Activated CD4-positive, alpha-beta T cell treated with anti-CD3 and anti-CD28 coated beads for 36 hours (primary cell): ENCODE measurements at regions of chr6 and their contacts with region 1.

Region 1: DNA sequence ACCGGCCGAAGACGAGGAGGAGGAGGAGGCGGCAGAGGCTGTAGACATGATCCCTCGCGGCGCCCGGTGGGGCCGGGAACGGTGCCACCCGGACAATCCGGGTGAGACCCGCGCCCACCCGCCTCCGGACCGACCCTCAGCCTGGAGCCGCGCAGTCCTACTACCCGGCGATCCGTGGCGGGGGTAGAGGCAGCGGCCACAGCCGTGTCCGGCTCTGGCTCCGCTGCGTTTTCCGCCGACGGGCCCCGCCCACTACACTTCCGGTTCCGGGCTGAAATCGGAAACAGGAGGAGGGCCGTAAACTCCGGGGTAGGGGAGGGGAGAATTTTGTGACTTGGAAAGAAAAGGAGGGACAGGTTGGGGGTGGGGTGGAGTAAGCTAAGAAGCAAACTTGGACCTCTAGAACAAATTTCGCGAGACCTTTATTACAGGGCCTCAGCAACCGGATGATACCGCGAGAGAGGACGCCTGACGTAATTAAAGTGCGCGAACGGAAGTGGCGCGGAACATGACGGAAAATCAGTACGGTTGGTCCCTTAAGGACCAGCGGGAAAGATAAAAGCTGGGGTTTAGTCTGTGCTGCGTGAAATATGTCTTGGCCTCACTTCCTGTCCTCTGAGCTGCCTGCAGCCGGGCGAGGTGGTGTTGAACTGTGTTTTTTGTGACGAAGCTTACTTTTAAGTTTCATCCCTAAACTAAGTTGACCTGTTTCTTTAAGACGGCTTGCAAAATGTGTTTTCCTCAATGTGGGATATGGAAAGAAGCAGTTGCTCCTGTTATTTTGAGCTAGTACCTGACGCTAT is at the start of gene MAP3K7:
- DNase-seq: peak; percentile 95
- ATAC-seq: peak; percentile 93
- H3K4me3 Mint-ChIP-seq: peak within 1 kb of the TSS; percentile 95
- H3K27ac Mint-ChIP-seq: peak within 1 kb of the TSS; percentile 98
- H3K4me1 Mint-ChIP-seq: peaks cover 40% of the 10 kb centered on the region
- H3K27me3 Mint-ChIP-seq: peaks cover 7% of the 10 kb centered on the region
- total RNA-seq, gene MAP3K7: 27.5 to 32.6 TPM

Region 2: DNA sequence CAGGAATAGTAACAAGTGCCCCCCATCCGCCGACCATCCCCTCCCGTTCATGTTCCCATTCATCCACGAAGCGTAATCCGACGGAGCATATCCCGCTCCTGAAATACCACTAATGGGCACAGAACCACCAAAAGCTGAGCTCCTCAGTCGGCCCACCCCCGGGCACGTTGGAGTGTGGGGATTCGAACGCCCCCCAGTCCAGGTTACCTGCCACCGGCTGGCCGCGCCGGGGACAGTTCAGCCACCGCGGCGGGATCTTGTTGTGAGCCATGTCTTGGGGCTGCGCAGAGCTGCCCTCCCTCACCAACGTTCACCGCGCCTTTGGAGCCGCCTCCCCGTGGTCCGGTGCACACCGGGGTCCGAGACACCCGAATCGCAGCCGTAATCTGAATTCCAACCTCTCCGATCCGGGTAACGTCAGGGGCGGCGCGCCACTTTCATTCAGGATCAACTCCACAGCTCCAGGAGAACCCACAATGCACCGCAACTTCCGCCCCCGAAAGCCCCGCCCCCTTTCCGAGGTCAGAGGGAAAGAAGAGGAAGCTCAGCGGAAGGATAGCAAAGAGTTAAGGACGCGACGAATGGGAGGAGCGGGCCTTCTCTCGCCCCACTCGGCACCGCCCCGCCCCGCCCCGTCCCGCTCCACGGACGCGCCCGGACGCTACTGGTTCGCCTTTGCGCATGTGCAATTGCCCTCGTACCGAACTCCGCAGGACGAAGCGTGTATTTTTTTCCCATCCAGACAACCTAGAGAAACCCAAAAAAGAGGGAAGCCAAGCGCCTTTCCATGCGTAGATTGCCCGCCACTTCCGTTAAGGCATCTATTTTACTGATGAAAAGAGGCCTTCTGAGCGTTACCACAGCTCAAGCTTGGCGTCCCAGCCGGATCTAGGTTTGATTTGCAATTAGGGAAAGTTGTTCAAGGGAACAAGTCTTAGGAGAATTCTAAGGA is 1623.6 kb before region 1 on chr6 and contains the start of gene RNGTT:
- CTCF ChIA-PET with region 1: no interaction called
- POLR2A ChIA-PET with region 1: no interaction called
- intact Hi-C with region 1: loop called in 1 of 2 experiments (anchors 1 kb)
- DNase-seq: peak; percentile 99
- ATAC-seq: peak; percentile 100
- H3K4me3 Mint-ChIP-seq: peak within 1 kb of the TSS; percentile 99
- H3K27ac Mint-ChIP-seq: peak within 1 kb of the TSS; percentile 93
- H3K4me1 Mint-ChIP-seq: peaks cover 45% of the 10 kb centered on the region
- H3K27me3 Mint-ChIP-seq: no peaks in the 10 kb centered on the region
- total RNA-seq, gene RNGTT: 17.5 to 21.5 TPM

Region 3: GRCh38 chr6:89412071-89413005 is 1174.7 kb before region 1 on chr6 and contains the start of gene RRAGD:
- CTCF ChIA-PET with region 1: no interaction called
- POLR2A ChIA-PET with region 1: no interaction called
- intact Hi-C with region 1: loop called in 1 of 2 experiments (anchors 5 kb)
- DNase-seq: peak; percentile 83
- ATAC-seq: peak; percentile 80
- H3K4me3 Mint-ChIP-seq: peak within 1 kb of the TSS; percentile 83
- H3K27ac Mint-ChIP-seq: peak within 1 kb of the TSS; percentile 85
- H3K4me1 Mint-ChIP-seq: peaks cover 20% of the 10 kb centered on the region
- H3K27me3 Mint-ChIP-seq: peaks cover 3% of the 10 kb centered on the region
- total RNA-seq, gene RRAGD: 19.6 to 20.1 TPM

Region 4: GRCh38 chr6:89638320-89639195 is 948.5 kb before region 1 on chr6 and contains the start of gene LYRM2:
- CTCF ChIA-PET with region 1: no interaction called
- POLR2A ChIA-PET with region 1: no interaction called
- intact Hi-C with region 1: loop called (anchors 1 kb)
- DNase-seq: peak; percentile 96
- ATAC-seq: peak; percentile 97
- H3K4me3 Mint-ChIP-seq: peak within 1 kb of the TSS; percentile 86
- H3K27ac Mint-ChIP-seq: peak within 1 kb of the TSS; percentile 98
- H3K4me1 Mint-ChIP-seq: peaks cover 22% of the 10 kb centered on the region
- H3K27me3 Mint-ChIP-seq: no peaks in the 10 kb centered on the region
- total RNA-seq, gene LYRM2: 24.5 to 27.9 TPM

Region 5: DNA sequence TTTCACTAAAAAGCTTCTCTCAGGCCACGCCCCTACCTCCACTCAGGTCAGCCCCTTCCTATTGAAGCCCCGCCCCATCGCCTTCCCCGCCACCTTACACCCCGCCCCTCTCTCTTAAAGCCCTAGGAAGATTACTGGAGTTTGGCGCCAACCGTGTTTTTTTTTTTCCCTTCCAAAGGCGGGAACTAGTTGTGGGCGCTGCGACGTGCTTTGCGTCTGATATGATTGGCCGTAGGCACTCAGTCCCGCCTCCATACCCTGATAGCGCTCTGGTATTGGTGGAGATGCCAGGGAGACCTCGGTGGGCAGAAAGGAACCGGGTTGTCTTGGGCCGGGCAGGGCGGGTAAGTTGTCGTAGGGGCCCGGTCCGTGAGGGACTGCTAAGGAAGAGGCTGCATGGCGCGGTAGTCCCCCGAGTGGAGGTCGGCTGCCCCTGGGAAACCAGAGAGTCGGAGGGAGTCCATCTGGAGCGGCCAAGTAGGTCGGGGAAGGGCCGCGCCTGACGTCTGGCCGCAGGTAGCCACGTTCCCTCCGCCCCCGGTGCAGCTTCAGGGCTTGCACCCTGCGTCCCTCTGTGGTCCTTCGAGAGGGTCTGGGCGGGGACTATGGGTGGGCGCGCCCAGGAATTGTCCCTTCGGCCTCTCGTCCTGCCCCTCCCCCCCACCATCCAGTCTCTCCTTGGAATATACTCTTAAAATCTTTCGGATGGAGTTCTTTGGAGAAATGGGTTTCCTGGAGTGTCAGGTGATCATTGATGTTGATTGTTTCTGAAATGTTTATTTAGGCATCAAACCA is 757.2 kb before region 1 on chr6 and contains the start of gene CASP8AP2:
- CTCF ChIA-PET with region 1: no interaction called
- POLR2A ChIA-PET with region 1: interaction called, 5 read pairs
- intact Hi-C with region 1: loop called (anchors 1 kb)
- DNase-seq: peak; percentile 98
- ATAC-seq: peak; percentile 96
- H3K4me3 Mint-ChIP-seq: peak within 1 kb of the TSS; percentile 97
- H3K27ac Mint-ChIP-seq: peak within 1 kb of the TSS; percentile 92
- H3K4me1 Mint-ChIP-seq: peaks cover 33% of the 10 kb centered on the region
- H3K27me3 Mint-ChIP-seq: no peaks in the 10 kb centered on the region
- total RNA-seq, gene CASP8AP2: 34.0 to 36.5 TPM

Region 6: GRCh38 chr6:90296346-90297114 is 290.5 kb before region 1 on chr6 and contains the start of gene BACH2:
- CTCF ChIA-PET with region 1: no interaction called
- POLR2A ChIA-PET with region 1: no interaction called
- intact Hi-C with region 1: loop called in 1 of 2 experiments (anchors 1 kb)
- DNase-seq: peak; percentile 99
- ATAC-seq: peak; percentile 66
- H3K4me3 Mint-ChIP-seq: peak within 1 kb of the TSS; percentile 86
- H3K27ac Mint-ChIP-seq: peak within 1 kb of the TSS; percentile 100
- H3K4me1 Mint-ChIP-seq: peaks cover 49% of the 10 kb centered on the region
- H3K27me3 Mint-ChIP-seq: peaks cover 7% of the 10 kb centered on the region
- total RNA-seq, gene BACH2: 74.7 to 87.3 TPM